ENCODE measurements at regions of chr6 and their contacts with region 1.

Region 1: GRCh38 chr6:108541838-108542759 is 18.6 kb upstream of the FOXO3 start:
- DNase-seq: peak; percentile 40 to 72
- ATAC-seq: peak; percentile 65 to 90 (median 82)
- H3K4me3 ChIP-seq: peak overlapping the region in 1 of 10 donors; percentile 6
- H3K27ac ChIP-seq: no peak overlapping the region
- H3K4me1 ChIP-seq: peaks cover 0 to 9% (median 0%) of the 10 kb centered on the region in 9 donors
- H3K27me3 ChIP-seq: no peaks in the 10 kb centered on the region
- CTCF ChIP-seq: peak; percentile 76 to 92 (median 85)

Region 2: DNA sequence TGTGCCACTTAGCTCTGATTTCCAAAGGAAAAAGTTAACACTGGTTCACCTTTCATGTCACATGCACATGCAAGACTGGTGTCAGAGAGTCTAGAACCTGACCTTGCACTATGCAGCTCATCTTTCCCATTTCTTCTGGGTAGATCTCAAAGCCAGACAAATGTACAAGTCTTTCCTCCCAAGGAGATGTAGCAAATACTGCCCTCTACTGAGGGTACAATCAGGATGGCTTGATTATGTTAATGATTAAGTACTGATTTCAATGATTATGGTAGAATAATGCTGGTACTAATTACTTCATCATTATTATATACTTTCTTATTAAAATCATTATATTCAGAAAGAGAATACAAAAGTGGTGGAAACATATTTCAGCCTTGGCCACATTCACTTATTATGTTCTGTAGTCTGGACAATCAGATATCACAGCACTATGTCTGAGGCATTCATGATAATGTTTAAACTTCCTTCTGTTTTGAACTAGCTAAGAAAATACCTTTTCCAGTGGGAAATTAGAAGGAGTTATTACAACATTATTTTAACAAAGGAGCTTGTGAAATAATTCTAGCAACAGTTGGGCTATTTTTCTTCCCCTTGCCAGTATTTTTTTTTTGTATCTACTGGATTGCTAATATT is 49.9 kb before region 1 on chr6:
- intact Hi-C with region 1: no loop called
- DNase-seq: peak in 1 of 2 donors; percentile 6
- ATAC-seq: peak in 3 of 8 donors; percentile 35 to 72 (median 67)
- H3K4me3 ChIP-seq: no peak overlapping the region
- H3K27ac ChIP-seq: no peak overlapping the region
- H3K4me1 ChIP-seq: peaks cover 0 to 7% (median 0%) of the 10 kb centered on the region in 9 donors
- H3K27me3 ChIP-seq: no peaks in the 10 kb centered on the region
- CTCF ChIP-seq: peak; percentile 20 to 85 (median 66)

Region 3: DNA sequence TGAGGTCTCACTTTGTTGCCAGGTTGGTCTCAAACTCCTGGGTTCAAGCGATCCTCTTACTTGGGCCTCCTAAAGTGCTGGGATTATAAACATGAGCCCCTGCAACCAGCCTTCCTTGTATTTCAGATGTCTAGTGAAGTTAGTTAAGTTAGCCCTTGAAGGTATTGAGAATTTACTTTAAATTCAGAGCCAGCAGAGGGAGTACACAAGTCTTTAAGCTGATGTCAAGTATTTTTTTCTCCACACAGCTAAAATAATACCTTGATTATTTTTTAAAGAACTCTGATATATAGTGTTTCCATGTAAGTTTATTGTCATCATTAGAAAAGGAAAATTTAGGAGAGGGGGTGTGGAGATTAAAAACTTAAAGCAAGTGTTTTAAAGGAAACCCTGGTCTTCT is 28.4 kb after region 1 on chr6:
- intact Hi-C with region 1: no loop called
- DNase-seq: no peak
- ATAC-seq: no peak
- H3K4me3 ChIP-seq: no peak overlapping the region
- H3K27ac ChIP-seq: peak overlapping the region in 1 of 10 donors; percentile 23
- H3K4me1 ChIP-seq: peaks cover 6 to 83% (median 61%) of the 10 kb centered on the region in 9 donors
- H3K27me3 ChIP-seq: no peaks in the 10 kb centered on the region
- CTCF ChIP-seq: peak in 1 of 9 donors; percentile 11

Region 4: DNA sequence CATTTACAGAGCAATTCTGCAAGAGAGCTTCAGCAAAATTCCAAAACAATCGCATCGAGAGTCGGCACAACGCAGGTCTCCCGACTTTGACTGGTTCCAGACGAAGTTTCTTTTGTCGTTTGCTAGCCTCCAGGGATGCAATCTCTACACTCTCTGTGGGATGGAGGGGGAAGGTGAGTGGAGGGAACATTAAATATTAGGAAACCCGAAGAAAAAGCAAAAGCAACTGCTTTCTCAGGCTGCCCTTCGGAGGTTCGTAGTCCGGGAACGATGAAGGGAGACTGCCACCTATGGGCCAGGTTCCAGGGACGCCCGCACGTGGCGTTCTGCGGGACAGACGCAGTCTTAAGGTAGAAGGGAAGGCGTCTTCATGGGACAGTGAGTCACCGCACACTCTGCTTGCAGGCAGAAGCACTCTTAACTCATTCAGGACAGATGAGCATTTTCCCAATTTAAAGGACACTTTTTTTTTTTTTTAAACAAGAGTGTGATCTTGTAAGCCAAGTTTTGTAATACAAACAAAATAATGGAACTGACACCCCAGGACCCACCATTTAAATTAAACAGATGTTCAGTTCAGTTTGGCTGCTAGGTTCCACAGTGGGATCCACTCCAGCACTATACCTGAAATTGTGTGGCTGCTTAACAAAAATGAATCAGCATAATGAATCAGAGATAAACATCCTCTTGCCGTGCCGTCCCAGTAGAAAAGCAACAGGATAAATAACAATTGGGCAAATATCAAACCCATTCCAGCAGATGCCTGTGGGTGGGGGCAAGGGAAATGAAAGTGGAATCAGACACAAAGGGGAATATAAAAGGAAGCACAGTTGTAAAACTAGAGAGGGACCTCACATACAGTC is 240.3 kb after region 1 on chr6:
- intact Hi-C with region 1: loop called (anchors 1 to 5 kb)
- DNase-seq: peak; percentile 82
- ATAC-seq: peak; percentile 89 to 96 (median 93)
- H3K4me3 ChIP-seq: peak overlapping the region in 9 of 10 donors; percentile 31 to 64 (median 55)
- H3K27ac ChIP-seq: peak overlapping the region in 5 of 10 donors; percentile 5 to 42 (median 33)
- H3K4me1 ChIP-seq: peaks cover 0 to 21% (median 7%) of the 10 kb centered on the region in 9 donors
- H3K27me3 ChIP-seq: no peaks in the 10 kb centered on the region
- CTCF ChIP-seq: peak; percentile 41 to 93 (median 82)

Region 5: DNA sequence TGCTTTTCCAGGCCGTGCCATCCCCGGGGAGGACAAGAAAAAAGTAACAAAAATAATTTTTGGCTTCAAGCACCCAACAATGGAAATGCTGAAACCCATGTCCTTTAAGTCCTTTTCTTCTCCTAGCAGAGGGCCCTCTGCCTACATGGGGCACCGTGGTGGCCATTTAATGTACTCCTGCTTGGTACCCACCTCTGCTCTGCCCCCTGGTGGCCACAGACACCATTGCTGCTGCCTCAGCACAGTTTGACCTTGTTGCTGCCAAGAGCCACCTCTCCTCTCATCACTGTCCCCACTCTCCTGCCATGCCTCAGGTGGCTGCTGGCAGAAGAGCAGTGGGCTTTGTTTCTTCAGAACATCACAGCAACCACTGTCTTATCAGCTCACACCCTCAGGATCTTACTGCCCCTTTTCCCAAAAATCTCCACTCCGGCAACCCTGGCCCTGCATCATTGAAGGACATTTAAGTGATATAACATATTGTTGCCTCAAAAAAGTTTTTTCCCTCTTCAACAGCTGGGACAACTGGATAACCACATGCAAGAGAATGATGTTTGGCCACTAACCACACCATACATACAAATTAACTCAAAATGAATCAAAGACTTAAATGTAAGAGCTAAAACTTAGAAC is 293.2 kb after region 1 on chr6:
- intact Hi-C with region 1: loop called (anchors 1 to 5 kb)
- DNase-seq: peak; percentile 88 to 89
- ATAC-seq: peak; percentile 89 to 96 (median 94)
- H3K4me3 ChIP-seq: no peak overlapping the region
- H3K27ac ChIP-seq: peak overlapping the region in 3 of 10 donors; percentile 8 to 39 (median 22)
- H3K4me1 ChIP-seq: peaks cover 0 to 32% (median 0%) of the 10 kb centered on the region in 9 donors
- H3K27me3 ChIP-seq: no peaks in the 10 kb centered on the region
- CTCF ChIP-seq: peak; percentile 85 to 97 (median 95)

Region 6: DNA sequence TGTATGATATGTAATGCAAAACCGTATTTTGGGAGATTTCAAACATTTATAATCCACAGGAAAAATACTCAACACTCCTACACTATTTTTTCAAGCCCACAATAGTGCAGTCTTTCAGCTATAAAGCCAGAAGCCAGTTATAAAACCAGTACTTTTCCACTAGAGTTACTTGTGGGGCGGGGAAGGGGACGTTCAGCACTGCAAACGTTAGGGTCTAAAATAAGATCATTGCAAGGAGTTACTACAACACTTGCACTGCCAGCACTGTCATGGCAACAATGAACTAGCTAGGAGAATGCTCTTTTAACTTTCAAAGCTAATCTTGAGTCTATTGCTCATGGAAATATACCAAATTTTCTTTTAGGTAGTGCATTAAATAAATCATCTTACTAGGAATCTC is 537.9 kb after region 1 on chr6:
- intact Hi-C with region 1: loop called in 3 of 10 experiments (anchors 2 to 10 kb)
- DNase-seq: peak in 1 of 2 donors; percentile 81
- ATAC-seq: peak; percentile 74 to 94 (median 91)
- H3K4me3 ChIP-seq: peak overlapping the region in 2 of 10 donors; percentile 2 to 5
- H3K27ac ChIP-seq: peak overlapping the region; percentile 21 to 86 (median 75)
- H3K4me1 ChIP-seq: peaks cover 0 to 89% (median 54%) of the 10 kb centered on the region in 9 donors
- H3K27me3 ChIP-seq: no peaks in the 10 kb centered on the region
- CTCF ChIP-seq: no peak

Region 7: DNA sequence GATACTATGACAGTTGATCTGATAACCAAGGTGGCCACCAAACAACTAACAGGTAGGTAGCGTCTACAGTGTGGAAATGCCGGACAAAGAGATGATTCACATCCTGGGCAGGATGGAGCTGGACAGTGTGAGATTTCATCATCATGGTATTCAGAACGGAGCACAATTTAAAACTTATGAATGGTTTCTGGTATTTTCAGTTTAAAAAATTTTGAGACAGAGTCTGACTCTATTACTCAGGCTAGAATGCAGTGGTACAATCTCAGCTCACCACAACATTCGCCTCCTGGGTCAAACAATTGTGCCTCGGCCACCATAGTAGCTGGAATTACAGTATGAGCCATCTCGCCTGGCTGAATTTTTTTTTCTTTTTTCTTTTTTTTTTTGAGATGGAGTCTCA is 597.0 kb after region 1 on chr6:
- intact Hi-C with region 1: no loop called
- DNase-seq: no peak
- ATAC-seq: peak in 1 of 8 donors; percentile 29
- H3K4me3 ChIP-seq: no peak overlapping the region
- H3K27ac ChIP-seq: no peak overlapping the region
- H3K4me1 ChIP-seq: peaks cover 0 to 4% (median 0%) of the 10 kb centered on the region in 9 donors
- H3K27me3 ChIP-seq: no peaks in the 10 kb centered on the region
- CTCF ChIP-seq: no peak

Region 8: GRCh38 chr6:109397020-109397419 is 854.9 kb after region 1 on chr6:
- intact Hi-C with region 1: loop called in 1 of 10 experiments (anchors 10 kb)
- DNase-seq: no peak
- ATAC-seq: peak in 5 of 8 donors; percentile 30 to 59 (median 47)
- H3K4me3 ChIP-seq: no peak overlapping the region
- H3K27ac ChIP-seq: no peak overlapping the region
- H3K4me1 ChIP-seq: no peaks in the 10 kb centered on the region
- H3K27me3 ChIP-seq: no peaks in the 10 kb centered on the region
- CTCF ChIP-seq: peak in 6 of 9 donors; percentile 23 to 53 (median 37)

Region 9: DNA sequence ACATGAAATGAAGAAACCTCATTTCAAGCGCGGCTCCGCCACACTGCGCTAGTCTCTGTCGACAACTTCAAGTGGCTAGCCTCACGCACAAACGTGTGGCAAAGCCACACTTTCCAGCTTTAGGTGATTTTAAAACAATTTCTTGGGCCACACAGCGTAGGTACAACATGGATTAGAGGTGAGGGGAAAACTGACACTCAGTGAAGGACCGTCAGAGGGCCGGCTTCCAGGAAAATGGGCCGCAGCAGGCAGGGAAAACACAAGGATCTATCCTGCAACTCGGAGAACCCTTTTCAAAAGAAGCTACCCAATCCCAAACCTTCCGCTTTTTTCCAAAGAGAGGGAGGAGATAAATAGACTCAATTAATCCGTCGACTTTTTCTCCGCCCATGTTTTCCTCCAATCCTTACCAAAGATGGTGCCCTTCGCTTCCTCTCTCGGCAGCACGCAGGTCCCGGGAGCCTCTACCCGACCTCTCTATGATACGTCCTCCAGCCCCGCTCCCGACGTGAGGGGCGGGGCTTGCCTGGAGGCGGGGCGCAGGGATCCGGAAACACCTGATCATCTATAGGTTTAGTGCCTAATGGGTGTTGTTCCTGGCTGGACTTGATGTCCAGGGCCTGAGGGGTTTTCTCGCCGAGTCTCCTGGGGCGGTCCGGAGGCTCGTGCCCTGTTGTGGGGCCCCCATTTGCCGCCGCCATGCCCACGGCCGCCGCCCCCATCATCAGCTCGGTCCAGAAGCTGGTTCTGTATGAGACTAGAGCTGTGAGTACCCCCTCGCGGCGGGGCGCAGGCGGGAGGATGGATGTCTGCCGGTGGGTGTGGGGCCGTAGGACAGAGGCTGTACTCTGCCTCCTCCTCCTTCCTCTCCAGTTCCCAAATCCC is 1148.9 kb after region 1 on chr6 and contains the starts of genes AK9 and FIG4:
- intact Hi-C with region 1: loop called in 1 of 10 experiments (anchors 5 kb)
- DNase-seq: peak; percentile 90 to 93
- ATAC-seq: peak; percentile 99 to 100 (median 100)
- H3K4me3 ChIP-seq: peak within 1 kb of the TSS; percentile 64 to 87 (median 78)
- H3K27ac ChIP-seq: peak within 1 kb of the TSS; percentile 34 to 93 (median 84)
- H3K4me1 ChIP-seq: peaks cover 0 to 28% (median 17%) of the 10 kb centered on the region in 9 donors
- H3K27me3 ChIP-seq: no peaks in the 10 kb centered on the region
- CTCF ChIP-seq: peak in 6 of 9 donors; percentile 16 to 53 (median 34)
- total RNA-seq, gene AK9: 6.8 to 17.0 (median 10.9) TPM
- total RNA-seq, gene FIG4: 7.6 to 13.1 (median 9.3) TPM

Measured in heart right ventricle (tissue), 16 donors.